ENCODE measurements at regions of chrX and their contacts with region 1.

Region 1: GRCh38 chrX:103464774-103465117 is 54.5 kb downstream of the RAB40A start:
- DNase-seq: peak; percentile 49 to 86
- ATAC-seq: peak; percentile 83 to 96 (median 92)
- H3K4me3 ChIP-seq: peak overlapping the region; percentile 31
- H3K4me3 Mint-ChIP-seq: peak overlapping the region; percentile 84
- H3K27ac ChIP-seq: no peak overlapping the region
- H3K27ac Mint-ChIP-seq: peak overlapping the region in 1 of 2 donors; percentile 58
- H3K4me1 ChIP-seq: peaks cover 6% of the 10 kb centered on the region
- H3K4me1 Mint-ChIP-seq: peaks cover 5 to 7% of the 10 kb centered on the region in 2 donors
- H3K27me3 ChIP-seq: no peaks in the 10 kb centered on the region
- H3K27me3 Mint-ChIP-seq: peaks cover 12 to 36% of the 10 kb centered on the region in 2 donors
- CTCF ChIP-seq: peak; percentile 46

Region 2: DNA sequence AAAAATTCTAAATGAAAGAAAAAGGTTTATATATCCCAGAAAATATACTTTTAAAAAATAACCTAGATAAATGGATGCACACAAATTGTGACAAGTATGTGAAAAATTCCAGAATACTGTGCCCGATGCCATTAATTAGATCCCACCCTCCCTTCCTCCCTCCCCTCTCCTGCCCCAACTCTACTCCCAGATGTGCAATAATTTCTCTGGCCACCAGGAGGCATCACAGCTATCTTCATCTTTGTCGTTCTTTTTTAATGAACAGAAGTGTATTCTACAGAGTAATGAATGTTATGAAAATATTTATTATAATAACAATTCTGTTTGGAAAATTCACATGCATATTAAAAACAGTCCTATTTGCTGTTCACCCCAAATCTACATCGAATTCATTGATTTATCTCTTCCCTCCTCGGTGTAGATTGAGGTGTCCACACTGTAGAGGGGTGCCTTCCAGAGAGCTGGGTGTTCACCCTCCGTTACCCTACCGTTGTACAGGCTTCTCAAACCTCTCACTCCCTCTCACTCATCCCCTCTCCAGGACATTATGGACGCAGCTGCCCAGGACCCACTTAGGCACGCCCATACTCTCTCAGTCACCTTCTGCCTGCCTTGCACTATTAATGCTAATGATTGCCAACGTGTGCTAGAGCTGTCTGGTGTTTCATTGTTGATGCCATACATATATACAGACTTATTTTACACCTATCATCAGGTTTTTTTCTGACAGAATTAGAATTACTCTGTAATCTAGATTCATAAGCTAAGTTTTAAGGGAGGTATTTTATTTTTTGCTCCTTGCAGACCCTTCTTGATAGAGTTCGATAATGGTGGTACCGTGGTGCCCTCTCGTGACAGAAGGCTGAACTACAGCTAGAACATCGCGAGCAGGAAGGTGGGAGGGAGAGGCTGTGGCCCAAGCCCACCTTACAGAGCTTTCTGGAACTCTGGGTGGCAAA is 513.6 kb before region 1 on chrX:
- intact Hi-C with region 1: loop called (anchors 5 kb)
- DNase-seq: peak; percentile 27 to 71
- ATAC-seq: peak; percentile 70 to 78 (median 70)
- H3K4me3 ChIP-seq: peak overlapping the region; percentile 16
- H3K4me3 Mint-ChIP-seq: peak overlapping the region; percentile 78
- H3K27ac ChIP-seq: no peak overlapping the region
- H3K27ac Mint-ChIP-seq: no peak overlapping the region
- H3K4me1 ChIP-seq: peaks cover 4% of the 10 kb centered on the region
- H3K4me1 Mint-ChIP-seq: peaks cover 7 to 13% of the 10 kb centered on the region in 2 donors
- H3K27me3 ChIP-seq: no peaks in the 10 kb centered on the region
- H3K27me3 Mint-ChIP-seq: peaks cover 3 to 15% of the 10 kb centered on the region in 2 donors
- CTCF ChIP-seq: peak; percentile 54

Region 3: GRCh38 chrX:103343105-103343504 is 121.6 kb before region 1 on chrX:
- intact Hi-C with region 1: loop called (anchors 1 kb)
- DNase-seq: peak in 1 of 2 donors; percentile 68
- ATAC-seq: peak in 2 of 3 donors; percentile 41 to 52
- H3K4me3 ChIP-seq: no peak overlapping the region
- H3K4me3 Mint-ChIP-seq: no peak overlapping the region
- H3K27ac ChIP-seq: no peak overlapping the region
- H3K27ac Mint-ChIP-seq: no peak overlapping the region
- H3K4me1 ChIP-seq: no peaks in the 10 kb centered on the region
- H3K4me1 Mint-ChIP-seq: no peaks in the 10 kb centered on the region
- H3K27me3 ChIP-seq: no peaks in the 10 kb centered on the region
- H3K27me3 Mint-ChIP-seq: peaks cover 3 to 42% of the 10 kb centered on the region in 2 donors
- CTCF ChIP-seq: peak; percentile 44